Activated T-helper 2 cell treated with anti-CD3 and anti-CD28 coated beads, Interferon-gamma antibody, Interleukin-2, Interleukin-4, amounts not matched to agents 10 μg/mL and 5 μg/mL and 100 μg/mL, durations not matched to agents 14 hours and 24 hours and 36 hours (primary cell): ENCODE measurements at regions of chr18 and their contacts with region 1.

Region 1: DNA sequence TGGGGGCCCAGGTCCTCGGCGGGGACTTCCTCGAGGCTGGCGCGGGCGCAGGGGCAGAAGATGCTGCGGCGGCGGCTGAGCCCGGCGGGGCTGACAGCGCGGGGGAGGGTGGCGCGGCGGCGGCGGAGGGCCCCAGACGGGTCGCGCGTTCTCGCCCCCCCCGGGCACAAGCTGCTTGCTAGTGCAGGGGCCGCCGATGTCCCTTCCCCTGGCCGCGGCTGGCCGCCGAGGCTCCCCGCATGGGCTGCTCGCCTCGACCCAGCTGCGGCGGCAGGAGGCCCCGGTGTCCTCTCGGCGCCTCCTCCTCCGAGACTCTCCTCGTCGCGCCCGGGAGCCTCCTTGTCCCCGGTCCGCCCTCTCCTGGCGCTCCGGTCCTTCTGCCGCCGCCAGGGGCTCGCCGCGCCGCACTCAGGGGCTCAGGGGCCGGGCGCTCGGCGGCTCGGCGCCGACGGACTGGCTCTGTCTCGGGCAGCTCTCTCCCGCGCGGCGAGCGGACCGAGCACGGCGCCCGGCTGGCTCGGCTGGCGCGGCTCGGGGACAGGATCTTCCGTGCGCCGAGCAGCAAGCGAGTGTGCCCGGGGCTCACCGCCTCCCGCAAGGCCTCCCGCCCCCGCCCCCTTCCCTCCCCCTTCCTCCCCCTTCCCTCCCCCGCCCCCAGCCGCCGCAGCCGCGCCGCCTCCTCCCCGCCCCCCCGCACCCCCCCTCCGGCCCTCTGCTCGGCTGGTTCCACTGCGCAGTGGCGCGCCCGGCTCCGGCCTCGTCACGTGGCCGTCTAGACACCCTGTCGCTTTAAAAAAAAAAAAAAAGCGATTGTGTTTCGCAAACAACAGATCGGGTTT is 902 bp upstream of the SMAD7 start:
- DNase-seq: peak; percentile 67
- H3K4me3 Mint-ChIP-seq: peak overlapping the region; percentile 93
- H3K27ac Mint-ChIP-seq: peak overlapping the region; percentile 94
- H3K4me1 Mint-ChIP-seq: peaks cover 40% of the 10 kb centered on the region
- H3K27me3 Mint-ChIP-seq: peaks cover 9% of the 10 kb centered on the region

Region 2: DNA sequence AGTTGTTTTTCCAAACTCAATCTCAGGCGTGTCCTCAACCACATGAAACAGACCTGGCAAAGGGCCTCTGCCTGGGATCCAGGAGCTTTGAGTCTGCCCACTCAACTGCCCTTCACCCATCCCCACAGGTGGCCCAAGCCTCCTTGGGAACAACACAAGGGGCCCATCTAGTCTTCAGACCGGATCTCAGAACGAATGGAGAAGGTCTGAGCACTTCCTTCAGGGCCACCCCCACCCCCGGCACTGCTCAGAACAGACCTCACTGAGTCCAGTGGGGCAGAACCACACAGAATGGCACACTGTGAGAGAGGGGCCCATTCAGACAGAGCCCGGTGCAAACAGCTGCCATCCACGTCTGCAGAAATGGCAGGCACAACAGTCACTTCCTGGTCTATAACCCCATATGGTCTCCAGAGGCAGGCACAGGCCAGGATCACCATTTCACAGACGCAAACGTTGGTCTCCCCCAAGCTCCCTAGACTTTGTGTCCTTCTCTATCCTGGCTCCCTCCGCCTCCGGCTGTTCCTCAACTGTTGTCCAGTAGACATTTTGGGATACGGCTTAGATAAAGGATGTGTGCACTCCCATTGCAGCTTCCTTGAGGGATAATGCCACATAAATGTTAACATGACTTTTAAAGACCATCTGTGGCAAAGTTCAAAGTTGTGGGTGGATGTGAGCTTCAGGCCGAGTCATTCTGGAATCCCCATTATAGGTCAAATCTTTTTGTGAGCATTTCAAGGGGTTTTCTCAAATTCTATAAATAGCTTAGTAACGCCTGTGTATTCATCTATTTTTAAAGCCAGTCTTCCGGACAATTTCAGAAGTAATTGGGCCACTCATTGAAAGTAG is 150.6 kb before region 1 on chr18:
- intact Hi-C with region 1: loop called (anchors 2 kb)
- DNase-seq: no peak
- H3K4me3 Mint-ChIP-seq: peak overlapping the region; percentile 46
- H3K27ac Mint-ChIP-seq: peak overlapping the region; percentile 94
- H3K4me1 Mint-ChIP-seq: peaks cover 61% of the 10 kb centered on the region
- H3K27me3 Mint-ChIP-seq: no peaks in the 10 kb centered on the region

Region 3: GRCh38 chr18:48934723-48935432 is 16.8 kb before region 1 on chr18:
- intact Hi-C with region 1: loop called (anchors 1 kb)
- DNase-seq: no peak
- H3K4me3 Mint-ChIP-seq: peak overlapping the region; percentile 51
- H3K27ac Mint-ChIP-seq: peak overlapping the region; percentile 76
- H3K4me1 Mint-ChIP-seq: peaks cover 79% of the 10 kb centered on the region
- H3K27me3 Mint-ChIP-seq: no peaks in the 10 kb centered on the region

Region 4: DNA sequence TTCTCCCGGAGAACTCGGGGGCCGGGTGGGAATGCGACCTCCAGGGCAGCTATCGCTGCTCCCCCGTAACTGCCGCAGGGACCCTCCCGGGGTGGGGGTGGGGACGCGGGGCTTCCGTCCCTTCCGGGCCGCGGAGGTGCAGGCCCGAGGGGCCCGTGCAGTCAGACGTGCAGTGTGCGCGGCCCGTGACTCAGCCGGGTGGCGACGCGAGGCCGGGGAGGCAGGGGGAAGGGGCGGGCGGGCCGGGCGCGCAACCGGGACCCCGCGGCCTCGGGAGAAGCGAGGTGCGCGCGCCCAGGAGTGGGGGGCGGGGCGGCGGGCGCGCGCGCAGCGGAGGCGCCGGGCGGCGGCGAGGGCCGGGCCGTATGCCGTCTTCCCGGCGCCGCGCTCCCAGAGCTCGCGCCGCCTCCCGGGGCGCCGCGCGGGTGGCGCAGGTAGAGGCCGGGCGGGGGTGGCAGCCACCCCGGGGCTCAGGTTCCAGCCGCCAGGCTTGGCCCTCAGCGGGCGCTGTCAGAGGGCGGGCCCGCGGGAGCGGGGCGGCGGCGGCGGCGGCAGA is 24.1 kb after region 1 on chr18:
- intact Hi-C with region 1: loop called (anchors 2 kb)
- DNase-seq: peak; percentile 22
- H3K4me3 Mint-ChIP-seq: peak overlapping the region; percentile 51
- H3K27ac Mint-ChIP-seq: no peak overlapping the region
- H3K4me1 Mint-ChIP-seq: peaks cover 11% of the 10 kb centered on the region
- H3K27me3 Mint-ChIP-seq: peaks cover 40% of the 10 kb centered on the region

Region 5: GRCh38 chr18:49813319-49814146 is 861.9 kb after region 1 on chr18 and contains the start of gene ACAA2:
- intact Hi-C with region 1: loop called (anchors 5 kb)
- DNase-seq: peak; percentile 76
- H3K4me3 Mint-ChIP-seq: peak within 1 kb of the TSS; percentile 89
- H3K27ac Mint-ChIP-seq: peak within 1 kb of the TSS; percentile 98
- H3K4me1 Mint-ChIP-seq: peaks cover 53% of the 10 kb centered on the region
- H3K27me3 Mint-ChIP-seq: no peaks in the 10 kb centered on the region
- total RNA-seq, gene ACAA2: 82.9 and 85.7 TPM in 2 replicates